ENCODE measurements at regions of chr17 and their contacts with region 1.

Region 1: GRCh38 chr17:43483674-43484372 is at the start of gene DHX8:
- DNase-seq: peak; percentile 100
- H3K4me3 Mint-ChIP-seq: peak within 1 kb of the TSS; percentile 100
- H3K27ac Mint-ChIP-seq: peak within 1 kb of the TSS; percentile 99
- H3K4me1 Mint-ChIP-seq: peaks cover 21% of the 10 kb centered on the region
- H3K27me3 Mint-ChIP-seq: no peaks in the 10 kb centered on the region
- total RNA-seq, gene DHX8: 54.2 and 56.6 TPM in 2 replicates

Region 2: GRCh38 chr17:43367737-43368242 is 116.0 kb before region 1 on chr17:
- intact Hi-C with region 1: loop called (anchors 1 kb)
- DNase-seq: peak; percentile 86
- H3K4me3 Mint-ChIP-seq: peak overlapping the region; percentile 93
- H3K27ac Mint-ChIP-seq: peak overlapping the region; percentile 100
- H3K4me1 Mint-ChIP-seq: peaks cover 51% of the 10 kb centered on the region
- H3K27me3 Mint-ChIP-seq: no peaks in the 10 kb centered on the region

Region 3: GRCh38 chr17:43388359-43389045 is 95.3 kb before region 1 on chr17:
- intact Hi-C with region 1: loop called (anchors 1 kb)
- DNase-seq: peak; percentile 98
- H3K4me3 Mint-ChIP-seq: peak overlapping the region; percentile 98
- H3K27ac Mint-ChIP-seq: peak overlapping the region; percentile 100
- H3K4me1 Mint-ChIP-seq: peaks cover 26% of the 10 kb centered on the region
- H3K27me3 Mint-ChIP-seq: peaks cover 2% of the 10 kb centered on the region

Region 4: DNA sequence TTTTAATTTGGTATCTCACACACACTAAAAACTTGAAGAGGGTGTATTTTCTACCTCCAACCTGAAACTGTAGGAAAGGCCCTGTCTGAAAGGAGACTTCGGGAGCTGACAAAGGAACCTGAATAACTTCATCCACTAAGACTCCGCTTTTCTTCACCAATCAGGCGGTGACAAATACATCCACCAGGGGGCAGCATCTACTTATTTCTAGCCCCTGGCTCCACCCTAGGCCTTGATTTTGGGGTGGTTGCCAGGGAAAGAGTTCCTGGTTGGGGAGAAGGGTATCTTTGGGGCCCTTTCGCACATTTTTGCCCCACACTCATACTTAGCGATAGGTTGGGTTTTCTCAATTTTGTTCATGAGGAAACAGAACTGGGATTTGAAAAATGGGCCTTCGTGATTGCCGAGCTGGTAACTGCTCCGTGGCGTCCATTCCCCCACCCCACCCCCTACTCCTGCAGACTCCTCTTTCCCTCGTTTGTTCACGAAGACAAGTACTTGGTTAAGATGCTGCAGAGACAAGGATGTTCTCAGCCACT is 89.8 kb before region 1 on chr17:
- intact Hi-C with region 1: loop called (anchors 1 kb)
- DNase-seq: peak; percentile 97
- H3K4me3 Mint-ChIP-seq: peak overlapping the region; percentile 28
- H3K27ac Mint-ChIP-seq: peak overlapping the region; percentile 2
- H3K4me1 Mint-ChIP-seq: peaks cover 42% of the 10 kb centered on the region
- H3K27me3 Mint-ChIP-seq: no peaks in the 10 kb centered on the region

Region 5: GRCh38 chr17:44006598-44007345 is 522.9 kb after region 1 on chr17:
- intact Hi-C with region 1: loop called (anchors 10 kb)
- DNase-seq: peak; percentile 96
- H3K4me3 Mint-ChIP-seq: peak overlapping the region; percentile 83
- H3K27ac Mint-ChIP-seq: peak overlapping the region; percentile 78
- H3K4me1 Mint-ChIP-seq: peaks cover 25% of the 10 kb centered on the region
- H3K27me3 Mint-ChIP-seq: peaks cover 16% of the 10 kb centered on the region

Measured in activated CD4-positive, alpha-beta T cell treated with anti-CD3 and anti-CD28 coated beads, Interleukin-2, amount 10 ng/mL, durations not matched to agents 24 days and 14 days (primary cell).